CD8-positive, alpha-beta memory T cell (primary cell): ENCODE measurements at regions of chr10 and their contacts with region 1.

Region 1: GRCh38 chr10:71696628-71697326 is 22.8 kb downstream of the C10orf105 start:
- DNase-seq: peak; percentile 35 to 75 (median 55)
- H3K4me3 ChIP-seq: no peak overlapping the region
- H3K4me3 Mint-ChIP-seq: peak overlapping the region in 5 of 7 donors; percentile 11 to 68 (median 28)
- H3K27ac ChIP-seq: no peak overlapping the region
- H3K27ac Mint-ChIP-seq: peak overlapping the region in 5 of 8 donors; percentile 51 to 88 (median 68)
- H3K4me1 ChIP-seq: peaks cover 54% of the 10 kb centered on the region
- H3K4me1 Mint-ChIP-seq: peaks cover 44 to 62% (median 52%) of the 10 kb centered on the region in 3 donors
- H3K27me3 ChIP-seq: no peaks in the 10 kb centered on the region
- H3K27me3 Mint-ChIP-seq: no peaks in the 10 kb centered on the region

Region 2: DNA sequence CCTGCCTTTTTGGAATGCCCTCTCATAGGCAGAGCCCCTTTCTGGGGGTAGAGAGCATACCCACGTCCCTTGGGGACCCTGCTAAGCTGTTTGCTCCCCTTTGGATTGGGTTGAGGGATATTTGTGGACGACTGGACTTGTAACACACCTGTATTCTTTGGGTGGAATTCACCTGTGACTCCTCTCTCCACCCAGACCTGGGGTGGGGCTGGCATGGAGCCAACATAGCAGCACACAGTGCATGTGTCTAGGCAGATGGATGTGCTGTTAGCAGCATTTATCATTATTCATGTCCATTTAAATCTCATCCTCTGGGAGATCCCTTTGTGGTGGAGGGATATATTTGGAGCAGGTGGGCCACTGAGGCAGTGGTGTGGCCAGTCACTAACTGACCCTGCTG is 249.1 kb before region 1 on chr10:
- CTCF ChIA-PET with region 1: no interaction called
- POLR2A ChIA-PET with region 1: no interaction called
- DNase-seq: no peak
- H3K4me3 ChIP-seq: no peak overlapping the region
- H3K4me3 Mint-ChIP-seq: no peak overlapping the region
- H3K27ac ChIP-seq: no peak overlapping the region
- H3K27ac Mint-ChIP-seq: no peak overlapping the region
- H3K4me1 ChIP-seq: no peaks in the 10 kb centered on the region
- H3K4me1 Mint-ChIP-seq: no peaks in the 10 kb centered on the region
- H3K27me3 ChIP-seq: no peaks in the 10 kb centered on the region
- H3K27me3 Mint-ChIP-seq: no peaks in the 10 kb centered on the region

Region 3: DNA sequence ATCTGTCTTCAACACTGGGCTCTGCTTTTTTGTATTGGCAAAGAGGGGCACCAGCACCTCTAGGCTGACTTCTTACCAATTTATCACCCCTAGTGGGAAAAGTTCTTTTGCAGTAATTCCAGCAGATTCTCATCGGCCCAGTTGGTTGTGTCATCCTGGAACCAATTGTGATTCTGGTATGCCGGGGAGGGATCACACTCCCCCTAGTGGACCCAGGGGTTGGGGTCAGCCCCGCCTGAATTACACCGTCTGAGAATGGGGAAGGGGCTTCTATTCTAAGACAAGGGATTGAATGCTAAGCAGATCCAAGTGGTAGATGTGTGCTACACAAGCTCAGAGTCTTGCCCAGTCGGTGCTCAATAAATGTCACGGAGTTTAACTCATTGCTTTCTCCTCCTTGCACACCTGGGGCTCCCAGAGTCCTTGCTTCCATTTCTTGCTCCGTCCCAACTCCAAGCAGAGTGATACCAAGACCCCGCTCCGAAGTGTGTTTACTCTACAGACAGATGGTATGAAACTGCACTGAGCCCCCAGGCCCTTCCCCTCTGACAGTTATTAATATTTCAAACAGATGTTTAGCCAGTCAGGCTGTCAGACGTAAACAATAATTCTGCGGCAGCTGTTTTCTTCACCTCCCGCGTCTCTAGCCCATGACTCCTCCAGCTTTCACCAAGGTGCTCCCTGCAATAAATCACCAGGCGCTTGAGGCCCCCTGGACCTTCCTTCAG is 49.1 kb before region 1 on chr10:
- CTCF ChIA-PET with region 1: no interaction called
- POLR2A ChIA-PET with region 1: no interaction called
- DNase-seq: no peak
- H3K4me3 ChIP-seq: no peak overlapping the region
- H3K4me3 Mint-ChIP-seq: no peak overlapping the region
- H3K27ac ChIP-seq: no peak overlapping the region
- H3K27ac Mint-ChIP-seq: no peak overlapping the region
- H3K4me1 ChIP-seq: no peaks in the 10 kb centered on the region
- H3K4me1 Mint-ChIP-seq: no peaks in the 10 kb centered on the region
- H3K27me3 ChIP-seq: no peaks in the 10 kb centered on the region
- H3K27me3 Mint-ChIP-seq: no peaks in the 10 kb centered on the region

Region 4: DNA sequence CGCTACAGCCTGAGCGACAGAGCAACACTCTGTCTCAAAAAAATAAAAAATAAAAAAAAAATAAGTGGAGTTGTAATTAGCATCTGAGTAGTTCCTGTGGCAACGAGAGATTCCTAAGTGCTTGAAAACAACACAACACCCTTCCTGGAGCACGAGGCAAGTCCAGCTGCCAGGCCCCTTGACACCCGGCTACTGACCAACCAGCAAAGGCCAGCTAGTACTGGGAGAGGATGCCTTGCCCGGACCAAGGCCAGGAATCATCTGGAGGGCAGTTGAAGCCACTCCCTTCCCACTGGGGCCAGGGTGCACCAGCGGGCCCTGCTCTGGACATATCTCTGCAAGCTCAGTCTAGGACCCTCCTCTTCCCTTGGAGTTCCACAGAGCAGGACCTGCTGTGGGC is 22.3 kb after region 1 on chr10:
- CTCF ChIA-PET with region 1: interaction called, 160 read pairs
- POLR2A ChIA-PET with region 1: no interaction called
- DNase-seq: no peak
- H3K4me3 ChIP-seq: no peak overlapping the region
- H3K4me3 Mint-ChIP-seq: no peak overlapping the region
- H3K27ac ChIP-seq: no peak overlapping the region
- H3K27ac Mint-ChIP-seq: no peak overlapping the region
- H3K4me1 ChIP-seq: peaks cover 55% of the 10 kb centered on the region
- H3K4me1 Mint-ChIP-seq: peaks cover 37 to 70% (median 45%) of the 10 kb centered on the region in 3 donors
- H3K27me3 ChIP-seq: no peaks in the 10 kb centered on the region
- H3K27me3 Mint-ChIP-seq: no peaks in the 10 kb centered on the region

Region 5: GRCh38 chr10:71812016-71812912 is 115.5 kb after region 1 on chr10:
- CTCF ChIA-PET with region 1: interaction called, 18 read pairs
- POLR2A ChIA-PET with region 1: no interaction called
- DNase-seq: peak; percentile 61 to 80 (median 74)
- H3K4me3 ChIP-seq: no peak overlapping the region
- H3K4me3 Mint-ChIP-seq: no peak overlapping the region
- H3K27ac ChIP-seq: no peak overlapping the region
- H3K27ac Mint-ChIP-seq: peak overlapping the region in 1 of 8 donors; percentile 19
- H3K4me1 ChIP-seq: peaks cover 5% of the 10 kb centered on the region
- H3K4me1 Mint-ChIP-seq: no peaks in the 10 kb centered on the region
- H3K27me3 ChIP-seq: no peaks in the 10 kb centered on the region
- H3K27me3 Mint-ChIP-seq: no peaks in the 10 kb centered on the region